ENCODE measurements at regions of chr1 and their contacts with region 1.

Region 1: GRCh38 chr1:9494929-9495758 is 44.1 kb upstream of the SLC25A33 start:
- DNase-seq: peak; percentile 65
- ATAC-seq: peak; percentile 81
- H3K4me3 Mint-ChIP-seq: peak overlapping the region; percentile 80
- H3K27ac Mint-ChIP-seq: no peak overlapping the region
- H3K4me1 Mint-ChIP-seq: peaks cover 10% of the 10 kb centered on the region
- H3K27me3 Mint-ChIP-seq: peaks cover 15% of the 10 kb centered on the region
- CTCF ChIP-seq: peak; percentile 69

Region 2: GRCh38 chr1:9181176-9181906 is 313.8 kb before region 1 on chr1:
- CTCF ChIA-PET with region 1: no interaction called
- POLR2A ChIA-PET with region 1: no interaction called
- intact Hi-C with region 1: loop called (anchors 1 kb)
- DNase-seq: peak; percentile 73
- ATAC-seq: peak; percentile 59
- H3K4me3 Mint-ChIP-seq: peak overlapping the region; percentile 82
- H3K27ac Mint-ChIP-seq: no peak overlapping the region
- H3K4me1 Mint-ChIP-seq: peaks cover 19% of the 10 kb centered on the region
- H3K27me3 Mint-ChIP-seq: peaks cover 19% of the 10 kb centered on the region
- CTCF ChIP-seq: peak; percentile 91

Region 3: DNA sequence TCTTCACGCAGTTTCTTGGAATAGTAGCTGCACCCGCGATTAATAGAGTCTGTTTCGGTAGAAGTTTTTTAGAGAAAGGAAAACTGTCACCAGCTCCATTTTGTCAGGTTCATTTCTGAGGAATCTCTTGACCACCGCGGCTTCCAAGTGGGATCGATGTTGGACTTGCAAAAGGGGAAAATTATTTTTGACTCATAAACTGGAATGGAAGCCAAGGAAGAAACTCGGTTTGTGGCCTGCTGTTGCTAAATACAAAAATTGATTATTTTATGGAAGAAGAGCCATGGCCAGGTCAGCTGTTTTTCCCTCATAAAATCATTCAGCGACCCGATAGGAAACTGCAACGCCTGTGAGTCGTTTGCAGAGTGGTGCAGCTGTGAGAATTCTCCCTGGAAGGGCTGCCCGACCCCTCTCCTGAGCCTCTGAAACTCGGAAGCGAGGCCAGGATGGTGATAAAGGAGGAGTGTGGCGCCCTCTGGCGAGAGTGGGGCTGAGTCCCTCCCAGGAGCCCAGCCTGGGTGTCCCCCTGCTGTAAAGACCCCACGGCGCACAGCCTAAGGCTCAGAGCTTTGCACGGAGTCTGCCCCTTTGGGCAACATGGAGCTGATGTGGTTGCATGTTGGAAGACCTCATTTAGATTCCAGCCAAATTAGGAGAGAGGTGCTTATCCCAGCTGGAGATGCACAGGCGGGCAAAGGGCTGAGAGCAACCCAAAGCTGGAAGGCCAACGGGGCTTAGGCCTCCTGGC is 39.5 kb before region 1 on chr1:
- CTCF ChIA-PET with region 1: interaction called, 25 read pairs
- POLR2A ChIA-PET with region 1: no interaction called
- intact Hi-C with region 1: loop called (anchors 1 kb)
- DNase-seq: peak; percentile 57
- ATAC-seq: peak; percentile 79
- H3K4me3 Mint-ChIP-seq: no peak overlapping the region
- H3K27ac Mint-ChIP-seq: no peak overlapping the region
- H3K4me1 Mint-ChIP-seq: peaks cover 2% of the 10 kb centered on the region
- H3K27me3 Mint-ChIP-seq: peaks cover 3% of the 10 kb centered on the region
- CTCF ChIP-seq: no peak

Region 4: GRCh38 chr1:9588551-9589143 is 93.5 kb after region 1 on chr1 and contains the start of gene TMEM201:
- CTCF ChIA-PET with region 1: interaction called, 3 read pairs
- POLR2A ChIA-PET with region 1: no interaction called
- intact Hi-C with region 1: loop called (anchors 5 kb)
- DNase-seq: peak; percentile 98
- ATAC-seq: peak; percentile 91
- H3K4me3 Mint-ChIP-seq: peak within 1 kb of the TSS; percentile 84
- H3K27ac Mint-ChIP-seq: peak within 1 kb of the TSS; percentile 12
- H3K4me1 Mint-ChIP-seq: peaks cover 38% of the 10 kb centered on the region
- H3K27me3 Mint-ChIP-seq: no peaks in the 10 kb centered on the region
- CTCF ChIP-seq: no peak
- total RNA-seq, gene TMEM201: 8.1 and 9.4 TPM in 2 replicates

Region 5: DNA sequence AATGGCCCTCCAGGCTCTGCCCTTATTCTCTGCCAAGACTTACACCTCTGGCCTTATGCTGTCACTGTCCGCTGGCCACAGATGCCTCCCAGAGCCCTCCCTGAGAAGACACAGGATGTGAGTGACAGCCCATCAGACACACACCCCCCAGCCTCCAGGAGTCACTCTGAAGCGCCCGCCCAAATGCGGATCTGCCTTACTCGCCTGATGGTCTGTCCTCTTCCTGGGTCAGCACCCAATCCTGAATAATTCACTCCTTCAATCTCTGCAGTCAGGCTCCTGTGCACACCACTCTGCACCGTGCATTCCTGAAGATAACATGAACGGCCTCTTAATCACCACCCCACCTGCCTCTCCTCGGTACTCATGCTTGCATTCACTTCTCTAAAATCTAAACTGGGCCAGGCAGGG is 314.0 kb after region 1 on chr1:
- CTCF ChIA-PET with region 1: no interaction called
- POLR2A ChIA-PET with region 1: no interaction called
- intact Hi-C with region 1: no loop called
- DNase-seq: no peak
- ATAC-seq: no peak
- H3K4me3 Mint-ChIP-seq: no peak overlapping the region
- H3K27ac Mint-ChIP-seq: no peak overlapping the region
- H3K4me1 Mint-ChIP-seq: peaks cover 32% of the 10 kb centered on the region
- H3K27me3 Mint-ChIP-seq: no peaks in the 10 kb centered on the region
- CTCF ChIP-seq: no peak